PC-9 (cell line): ENCODE measurements at regions of chr1 and their contacts with region 1.

Region 1: GRCh38 chr1:72616686-72617085 is 334.3 kb upstream of the NEGR1 start:
- DNase-seq: no peak
- H3K4me3 ChIP-seq: no peak overlapping the region
- H3K27ac ChIP-seq: no peak overlapping the region
- H3K4me1 ChIP-seq: no peaks in the 10 kb centered on the region
- H3K27me3 ChIP-seq: no peaks in the 10 kb centered on the region
- CTCF ChIP-seq: no peak

Region 2: GRCh38 chr1:72218141-72218739 is 398.4 kb before region 1 on chr1:
- CTCF ChIA-PET with region 1: no interaction called
- POLR2A ChIA-PET with region 1: interaction called, 28 read pairs
- intact Hi-C with region 1: no loop called
- DNase-seq: no peak
- H3K4me3 ChIP-seq: no peak overlapping the region
- H3K27ac ChIP-seq: no peak overlapping the region
- H3K4me1 ChIP-seq: no peaks in the 10 kb centered on the region
- H3K27me3 ChIP-seq: no peaks in the 10 kb centered on the region
- CTCF ChIP-seq: no peak